ENCODE measurements at regions of chr9 and their contacts with region 1.

Region 1: GRCh38 chr9:128892317-128892921 is 10.5 kb downstream of the LRRC8A start:
- DNase-seq: peak; percentile 33 to 58
- ATAC-seq: peak; percentile 84 to 89 (median 89)
- H3K4me3 ChIP-seq: no peak overlapping the region
- H3K4me3 Mint-ChIP-seq: peak overlapping the region; percentile 42
- H3K27ac ChIP-seq: peak overlapping the region; percentile 74
- H3K27ac Mint-ChIP-seq: peak overlapping the region; percentile 85 to 95
- H3K4me1 ChIP-seq: peaks cover 65% of the 10 kb centered on the region
- H3K4me1 Mint-ChIP-seq: peaks cover 46 to 64% of the 10 kb centered on the region in 2 donors
- H3K27me3 ChIP-seq: no peaks in the 10 kb centered on the region
- H3K27me3 Mint-ChIP-seq: no peaks in the 10 kb centered on the region
- CTCF ChIP-seq: no peak

Region 2: GRCh38 chr9:128845155-128845931 is 47.1 kb before region 1 on chr9:
- intact Hi-C with region 1: no loop called
- DNase-seq: no peak
- ATAC-seq: peak in 1 of 3 donors; percentile 30
- H3K4me3 ChIP-seq: no peak overlapping the region
- H3K4me3 Mint-ChIP-seq: no peak overlapping the region
- H3K27ac ChIP-seq: no peak overlapping the region
- H3K27ac Mint-ChIP-seq: no peak overlapping the region
- H3K4me1 ChIP-seq: no peaks in the 10 kb centered on the region
- H3K4me1 Mint-ChIP-seq: no peaks in the 10 kb centered on the region
- H3K27me3 ChIP-seq: no peaks in the 10 kb centered on the region
- H3K27me3 Mint-ChIP-seq: no peaks in the 10 kb centered on the region
- CTCF ChIP-seq: no peak

Region 3: GRCh38 chr9:128863647-128864046 is 28.8 kb before region 1 on chr9:
- intact Hi-C with region 1: no loop called
- DNase-seq: peak; percentile 85 to 90
- ATAC-seq: peak; percentile 90 to 100 (median 98)
- H3K4me3 ChIP-seq: no peak overlapping the region
- H3K4me3 Mint-ChIP-seq: no peak overlapping the region
- H3K27ac ChIP-seq: no peak overlapping the region
- H3K27ac Mint-ChIP-seq: peak overlapping the region in 1 of 2 donors; percentile 14
- H3K4me1 ChIP-seq: peaks cover 5% of the 10 kb centered on the region
- H3K4me1 Mint-ChIP-seq: peaks cover 0 to 6% of the 10 kb centered on the region in 2 donors
- H3K27me3 ChIP-seq: no peaks in the 10 kb centered on the region
- H3K27me3 Mint-ChIP-seq: no peaks in the 10 kb centered on the region
- CTCF ChIP-seq: peak; percentile 94

Region 4: GRCh38 chr9:128902351-128903078 is 10.1 kb after region 1 on chr9:
- intact Hi-C with region 1: loop called (anchors 1 kb)
- DNase-seq: peak; percentile 81 to 93
- ATAC-seq: peak; percentile 78 to 92 (median 89)
- H3K4me3 ChIP-seq: peak overlapping the region; percentile 12
- H3K4me3 Mint-ChIP-seq: peak overlapping the region; percentile 83
- H3K27ac ChIP-seq: peak overlapping the region; percentile 84
- H3K27ac Mint-ChIP-seq: peak overlapping the region; percentile 87 to 95
- H3K4me1 ChIP-seq: peaks cover 81% of the 10 kb centered on the region
- H3K4me1 Mint-ChIP-seq: peaks cover 40 to 78% of the 10 kb centered on the region in 2 donors
- H3K27me3 ChIP-seq: no peaks in the 10 kb centered on the region
- H3K27me3 Mint-ChIP-seq: no peaks in the 10 kb centered on the region
- CTCF ChIP-seq: no peak

Region 5: GRCh38 chr9:129080602-129081387 is 188.4 kb after region 1 on chr9 and contains the start of gene DOLPP1:
- intact Hi-C with region 1: no loop called
- DNase-seq: peak; percentile 99
- ATAC-seq: peak; percentile 93 to 99 (median 94)
- H3K4me3 ChIP-seq: peak within 1 kb of the TSS; percentile 80
- H3K4me3 Mint-ChIP-seq: peak within 1 kb of the TSS; percentile 93
- H3K27ac ChIP-seq: peak within 1 kb of the TSS; percentile 66
- H3K27ac Mint-ChIP-seq: peak within 1 kb of the TSS; percentile 82 to 93
- H3K4me1 ChIP-seq: peaks cover 21% of the 10 kb centered on the region
- H3K4me1 Mint-ChIP-seq: peaks cover 9 to 22% of the 10 kb centered on the region in 2 donors
- H3K27me3 ChIP-seq: no peaks in the 10 kb centered on the region
- H3K27me3 Mint-ChIP-seq: no peaks in the 10 kb centered on the region
- CTCF ChIP-seq: no peak
- total RNA-seq, gene DOLPP1: 7.5 to 11.6 (median 7.8) TPM